Aorta (tissue), 5 donors: ENCODE measurements at regions of chr4 and their contacts with region 1.

Region 1: GRCh38 chr4:38499101-38499500 is 164.9 kb upstream of the KLF3 start:
- DNase-seq: no peak
- ATAC-seq: no peak
- H3K4me3 ChIP-seq: no peak overlapping the region
- H3K27ac ChIP-seq: no peak overlapping the region
- H3K4me1 ChIP-seq: no peaks in the 10 kb centered on the region
- H3K27me3 ChIP-seq: no peaks in the 10 kb centered on the region

Region 2: GRCh38 chr4:38430841-38431240 is 68.3 kb before region 1 on chr4:
- intact Hi-C with region 1: loop called in 1 of 2 experiments (anchors 2 kb)
- DNase-seq: no peak
- ATAC-seq: no peak
- H3K4me3 ChIP-seq: no peak overlapping the region
- H3K27ac ChIP-seq: no peak overlapping the region
- H3K4me1 ChIP-seq: no peaks in the 10 kb centered on the region
- H3K27me3 ChIP-seq: peaks cover 0 to 2% of the 10 kb centered on the region in 2 donors